Heart right ventricle (tissue), 16 donors: ENCODE measurements at regions of chr7 and their contacts with region 1.

Region 1: DNA sequence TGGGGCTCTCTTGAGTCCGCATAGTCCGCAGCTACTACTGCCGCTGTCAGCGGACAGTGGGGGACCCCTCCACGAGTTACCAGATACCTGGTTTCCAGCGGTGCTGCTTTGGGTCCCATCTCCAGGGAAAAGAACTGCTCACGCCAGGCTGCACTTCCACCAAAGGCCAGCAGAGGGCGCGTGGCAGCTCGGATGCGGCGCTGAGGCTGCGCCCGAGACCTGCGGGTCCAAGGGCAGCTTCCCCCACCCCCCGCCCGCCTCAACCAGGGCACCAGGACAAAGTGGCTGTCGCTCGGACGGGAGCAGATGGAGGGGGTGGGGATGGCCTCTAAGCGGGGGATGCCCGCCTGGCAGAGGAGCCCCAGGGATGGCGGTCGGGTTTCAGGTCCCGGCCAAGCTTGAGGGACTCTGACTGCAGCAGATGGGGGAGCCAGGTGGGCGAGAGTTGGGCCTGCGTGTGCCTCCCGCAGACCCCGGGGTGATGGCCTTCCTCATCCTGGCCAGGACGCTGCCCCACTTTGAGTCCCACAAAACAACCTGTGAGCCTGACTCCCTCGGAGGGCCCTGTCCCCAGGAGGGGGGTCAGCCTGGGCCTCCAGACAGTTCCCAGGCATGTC is 23.8 kb upstream of the ZNF735 start:
- DNase-seq: peak; percentile 22 to 38
- ATAC-seq: peak in 3 of 8 donors; percentile 37 to 50 (median 38)
- H3K4me3 ChIP-seq: no peak overlapping the region
- H3K27ac ChIP-seq: no peak overlapping the region
- H3K4me1 ChIP-seq: peaks cover 0 to 6% (median 0%) of the 10 kb centered on the region in 9 donors
- H3K27me3 ChIP-seq: peaks cover 20 to 42% (median 24%) of the 10 kb centered on the region in 7 donors
- CTCF ChIP-seq: peak; percentile 69 to 89 (median 79)

Region 2: DNA sequence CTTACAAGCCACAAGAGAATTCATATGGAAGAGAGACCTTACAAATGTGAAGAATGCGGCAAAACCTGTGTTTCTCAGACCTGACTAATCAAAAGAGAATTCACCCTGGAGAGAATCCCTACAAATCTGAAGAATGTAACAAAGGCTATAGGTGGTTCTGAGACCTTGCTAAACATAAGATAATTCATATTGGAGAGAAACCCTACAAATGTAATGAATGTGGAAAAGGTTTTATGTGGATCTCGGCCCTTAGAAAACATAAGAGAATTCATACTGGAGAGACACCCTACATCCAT is 104.6 kb before region 1 on chr7:
- intact Hi-C with region 1: no loop called
- DNase-seq: no peak
- ATAC-seq: no peak
- H3K4me3 ChIP-seq: no peak overlapping the region
- H3K27ac ChIP-seq: no peak overlapping the region
- H3K4me1 ChIP-seq: no peaks in the 10 kb centered on the region
- H3K27me3 ChIP-seq: no peaks in the 10 kb centered on the region
- CTCF ChIP-seq: no peak

Region 3: GRCh38 chr7:64131696-64132095 is 51.5 kb before region 1 on chr7:
- intact Hi-C with region 1: loop called in 1 of 10 experiments (anchors 10 kb)
- DNase-seq: no peak
- ATAC-seq: no peak
- H3K4me3 ChIP-seq: no peak overlapping the region
- H3K27ac ChIP-seq: no peak overlapping the region
- H3K4me1 ChIP-seq: no peaks in the 10 kb centered on the region
- H3K27me3 ChIP-seq: no peaks in the 10 kb centered on the region
- CTCF ChIP-seq: no peak

Region 4: GRCh38 chr7:64241162-64241561 is 57.9 kb after region 1 on chr7:
- intact Hi-C with region 1: loop called in 1 of 10 experiments (anchors 10 kb)
- DNase-seq: no peak
- ATAC-seq: no peak
- H3K4me3 ChIP-seq: no peak overlapping the region
- H3K27ac ChIP-seq: no peak overlapping the region
- H3K4me1 ChIP-seq: no peaks in the 10 kb centered on the region
- H3K27me3 ChIP-seq: no peaks in the 10 kb centered on the region
- CTCF ChIP-seq: no peak